Activated CD4-positive, alpha-beta memory T cell treated with anti-CD3 and anti-CD28 coated beads for 36 hours (primary cell): ENCODE measurements at regions of chr7 and their contacts with region 1.

Region 1: GRCh38 chr7:159165352-159165751 is 20.7 kb upstream of the VIPR2 start:
- DNase-seq: no peak
- H3K4me3 Mint-ChIP-seq: no peak overlapping the region
- H3K27ac Mint-ChIP-seq: no peak overlapping the region
- H3K4me1 Mint-ChIP-seq: no peaks in the 10 kb centered on the region
- H3K27me3 Mint-ChIP-seq: peaks cover 2% of the 10 kb centered on the region

Region 2: GRCh38 chr7:159127691-159128642 is 37.4 kb before region 1 on chr7:
- CTCF ChIA-PET with region 1: no interaction called
- POLR2A ChIA-PET with region 1: no interaction called
- intact Hi-C with region 1: loop called (anchors 2 kb)
- DNase-seq: no peak
- H3K4me3 Mint-ChIP-seq: no peak overlapping the region
- H3K27ac Mint-ChIP-seq: no peak overlapping the region
- H3K4me1 Mint-ChIP-seq: no peaks in the 10 kb centered on the region
- H3K27me3 Mint-ChIP-seq: peaks cover 20% of the 10 kb centered on the region

Region 3: DNA sequence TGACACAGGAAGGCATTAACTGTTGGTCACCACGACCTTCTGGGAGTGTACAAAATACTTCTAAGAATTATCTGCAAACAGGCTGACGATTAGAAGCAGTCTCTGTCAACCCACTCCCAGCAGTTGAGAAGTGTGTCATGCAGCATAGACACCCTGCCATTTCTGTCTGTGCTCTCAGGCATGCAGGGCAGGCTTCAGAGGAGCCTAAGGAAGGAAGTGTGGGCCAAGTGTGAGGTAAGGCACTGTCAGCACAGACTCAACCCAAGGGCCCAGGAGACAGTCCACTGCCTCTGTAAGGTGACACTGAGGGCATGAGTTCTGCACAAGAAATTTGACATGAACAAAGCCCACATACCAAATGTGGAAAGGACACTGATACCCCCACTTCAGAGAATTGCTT is 88.3 kb after region 1 on chr7:
- CTCF ChIA-PET with region 1: no interaction called
- POLR2A ChIA-PET with region 1: no interaction called
- intact Hi-C with region 1: no loop called
- DNase-seq: no peak
- H3K4me3 Mint-ChIP-seq: no peak overlapping the region
- H3K27ac Mint-ChIP-seq: no peak overlapping the region
- H3K4me1 Mint-ChIP-seq: no peaks in the 10 kb centered on the region
- H3K27me3 Mint-ChIP-seq: peaks cover 11% of the 10 kb centered on the region